Caco-2 (cell line): ENCODE measurements at regions of chr3 and their contacts with region 1.

Region 1: GRCh38 chr3:136752422-136753325 is 496 bp upstream of the STAG1 start:
- DNase-seq: peak; percentile 97 to 99
- H3K4me3 ChIP-seq: peak overlapping the region; percentile 77
- H3K4me3 Mint-ChIP-seq: peak overlapping the region; percentile 76
- H3K27ac Mint-ChIP-seq: peak overlapping the region; percentile 92
- H3K4me1 ChIP-seq: peaks cover 17% of the 10 kb centered on the region
- H3K4me1 Mint-ChIP-seq: peaks cover 18% of the 10 kb centered on the region
- H3K27me3 ChIP-seq: no peaks in the 10 kb centered on the region
- H3K27me3 Mint-ChIP-seq: no peaks in the 10 kb centered on the region
- CTCF ChIP-seq: peak in 1 of 2 experiments; percentile 26

Region 2: DNA sequence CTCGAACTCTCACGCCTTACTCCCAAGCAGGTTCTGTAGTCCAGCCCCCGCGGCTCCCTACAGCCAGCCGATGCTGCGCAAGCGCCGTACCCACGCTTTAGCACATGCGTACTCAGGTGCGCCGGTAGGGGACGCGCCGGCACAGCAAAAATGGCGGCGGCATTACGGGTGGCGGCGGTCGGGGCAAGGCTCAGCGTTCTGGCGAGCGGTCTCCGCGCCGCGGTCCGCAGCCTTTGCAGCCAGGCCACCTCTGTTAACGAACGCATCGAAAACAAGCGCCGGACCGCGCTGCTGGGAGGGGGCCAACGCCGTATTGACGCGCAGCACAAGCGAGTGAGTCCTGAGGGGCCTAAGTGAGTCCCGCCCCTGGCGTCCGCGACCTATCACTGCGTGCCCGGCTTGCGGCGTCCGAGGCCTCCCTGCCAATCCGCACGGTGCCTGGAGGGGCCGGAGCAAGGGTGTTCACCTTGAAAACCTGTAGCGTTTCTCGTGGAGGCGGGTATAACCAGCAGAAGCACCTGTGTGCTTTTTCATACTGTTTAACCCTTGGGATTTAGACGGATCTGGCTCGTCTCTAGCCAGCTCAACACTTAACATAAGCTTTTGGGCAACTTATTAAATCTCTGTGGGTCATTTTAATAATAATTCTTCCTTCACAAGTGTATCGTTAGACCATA is 502.3 kb before region 1 on chr3 and contains the start of gene PCCB:
- CTCF ChIA-PET with region 1: no interaction called
- POLR2A ChIA-PET with region 1: no interaction called
- intact Hi-C with region 1: loop called (anchors 2 kb)
- DNase-seq: peak; percentile 97 to 98
- H3K4me3 ChIP-seq: peak within 1 kb of the TSS; percentile 44
- H3K4me3 Mint-ChIP-seq: peak within 1 kb of the TSS; percentile 80
- H3K27ac Mint-ChIP-seq: peak within 1 kb of the TSS; percentile 99
- H3K4me1 ChIP-seq: peaks cover 33% of the 10 kb centered on the region
- H3K4me1 Mint-ChIP-seq: peaks cover 33% of the 10 kb centered on the region
- H3K27me3 ChIP-seq: no peaks in the 10 kb centered on the region
- H3K27me3 Mint-ChIP-seq: no peaks in the 10 kb centered on the region
- CTCF ChIP-seq: peak; percentile 76 to 87
- total RNA-seq, gene PCCB: 39.7 and 45.5 TPM in 2 replicates

Region 3: DNA sequence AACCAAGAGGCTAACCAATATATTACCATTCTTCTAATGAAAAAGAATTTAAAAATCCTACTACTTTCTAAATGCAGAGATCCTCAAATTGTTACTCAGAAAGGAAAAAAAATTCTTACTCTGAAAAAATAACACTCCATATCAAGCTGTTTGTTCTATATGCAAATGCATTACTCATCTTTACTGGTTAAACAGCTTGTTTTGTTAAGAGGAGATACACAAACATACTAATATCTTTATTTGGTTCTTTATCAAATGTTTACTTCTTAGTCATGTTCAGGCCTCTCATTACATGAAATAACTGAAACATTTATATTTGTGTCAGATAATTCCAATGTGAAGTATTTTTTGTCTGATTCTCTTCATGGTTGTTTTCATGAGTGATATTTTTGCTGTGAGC is 355.8 kb before region 1 on chr3:
- CTCF ChIA-PET with region 1: interaction called, 29 read pairs
- POLR2A ChIA-PET with region 1: interaction called, 5 read pairs
- intact Hi-C with region 1: no loop called
- DNase-seq: no peak
- H3K4me3 ChIP-seq: no peak overlapping the region
- H3K4me3 Mint-ChIP-seq: no peak overlapping the region
- H3K27ac Mint-ChIP-seq: no peak overlapping the region
- H3K4me1 ChIP-seq: no peaks in the 10 kb centered on the region
- H3K4me1 Mint-ChIP-seq: no peaks in the 10 kb centered on the region
- H3K27me3 ChIP-seq: no peaks in the 10 kb centered on the region
- H3K27me3 Mint-ChIP-seq: no peaks in the 10 kb centered on the region
- CTCF ChIP-seq: no peak

Region 4: GRCh38 chr3:136577792-136578191 is 174.9 kb before region 1 on chr3:
- CTCF ChIA-PET with region 1: interaction called, 34 read pairs
- POLR2A ChIA-PET with region 1: interaction called, 20 read pairs
- intact Hi-C with region 1: loop called (anchors 5 kb)
- DNase-seq: peak; percentile 31 to 39
- H3K4me3 ChIP-seq: no peak overlapping the region
- H3K4me3 Mint-ChIP-seq: peak overlapping the region; percentile 5
- H3K27ac Mint-ChIP-seq: peak overlapping the region; percentile 71
- H3K4me1 ChIP-seq: peaks cover 45% of the 10 kb centered on the region
- H3K4me1 Mint-ChIP-seq: peaks cover 30% of the 10 kb centered on the region
- H3K27me3 ChIP-seq: no peaks in the 10 kb centered on the region
- H3K27me3 Mint-ChIP-seq: no peaks in the 10 kb centered on the region
- CTCF ChIP-seq: peak in 1 of 2 experiments; percentile 4

Region 5: GRCh38 chr3:136617198-136617597 is 135.5 kb before region 1 on chr3:
- CTCF ChIA-PET with region 1: interaction called, 11 read pairs
- POLR2A ChIA-PET with region 1: no interaction called
- intact Hi-C with region 1: loop called (anchors 1 kb)
- DNase-seq: peak; percentile 41 to 45
- H3K4me3 ChIP-seq: no peak overlapping the region
- H3K4me3 Mint-ChIP-seq: no peak overlapping the region
- H3K27ac Mint-ChIP-seq: no peak overlapping the region
- H3K4me1 ChIP-seq: peaks cover 12% of the 10 kb centered on the region; the same call in 1 of the 2 replicates
- H3K4me1 Mint-ChIP-seq: peaks cover 16% of the 10 kb centered on the region
- H3K27me3 ChIP-seq: no peaks in the 10 kb centered on the region
- H3K27me3 Mint-ChIP-seq: no peaks in the 10 kb centered on the region
- CTCF ChIP-seq: peak in 1 of 2 experiments; percentile 18

Region 6: DNA sequence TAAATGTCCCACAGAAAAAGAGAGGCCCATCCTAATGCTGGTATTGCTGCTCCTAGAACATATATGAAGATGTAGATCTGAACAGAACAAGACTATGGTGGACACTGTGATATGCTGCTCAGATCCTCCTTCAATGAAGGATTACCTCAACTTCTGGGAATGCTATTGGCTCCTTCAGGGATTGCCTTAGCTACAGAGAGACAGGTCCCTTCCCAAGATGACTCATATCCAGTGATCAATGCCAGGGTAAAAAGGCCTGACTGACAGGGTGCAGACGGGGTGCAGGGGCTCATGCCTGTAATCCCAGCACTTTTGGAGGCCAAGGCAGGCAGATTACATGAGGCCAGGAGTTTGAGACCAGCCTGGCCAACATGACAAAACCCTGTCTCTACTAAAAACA is 20.0 kb after region 1 on chr3:
- CTCF ChIA-PET with region 1: no interaction called
- POLR2A ChIA-PET with region 1: no interaction called
- intact Hi-C with region 1: no loop called
- DNase-seq: no peak
- H3K4me3 ChIP-seq: no peak overlapping the region
- H3K4me3 Mint-ChIP-seq: no peak overlapping the region
- H3K27ac Mint-ChIP-seq: no peak overlapping the region
- H3K4me1 ChIP-seq: no peaks in the 10 kb centered on the region
- H3K4me1 Mint-ChIP-seq: no peaks in the 10 kb centered on the region
- H3K27me3 ChIP-seq: no peaks in the 10 kb centered on the region
- H3K27me3 Mint-ChIP-seq: no peaks in the 10 kb centered on the region
- CTCF ChIP-seq: no peak

Region 7: DNA sequence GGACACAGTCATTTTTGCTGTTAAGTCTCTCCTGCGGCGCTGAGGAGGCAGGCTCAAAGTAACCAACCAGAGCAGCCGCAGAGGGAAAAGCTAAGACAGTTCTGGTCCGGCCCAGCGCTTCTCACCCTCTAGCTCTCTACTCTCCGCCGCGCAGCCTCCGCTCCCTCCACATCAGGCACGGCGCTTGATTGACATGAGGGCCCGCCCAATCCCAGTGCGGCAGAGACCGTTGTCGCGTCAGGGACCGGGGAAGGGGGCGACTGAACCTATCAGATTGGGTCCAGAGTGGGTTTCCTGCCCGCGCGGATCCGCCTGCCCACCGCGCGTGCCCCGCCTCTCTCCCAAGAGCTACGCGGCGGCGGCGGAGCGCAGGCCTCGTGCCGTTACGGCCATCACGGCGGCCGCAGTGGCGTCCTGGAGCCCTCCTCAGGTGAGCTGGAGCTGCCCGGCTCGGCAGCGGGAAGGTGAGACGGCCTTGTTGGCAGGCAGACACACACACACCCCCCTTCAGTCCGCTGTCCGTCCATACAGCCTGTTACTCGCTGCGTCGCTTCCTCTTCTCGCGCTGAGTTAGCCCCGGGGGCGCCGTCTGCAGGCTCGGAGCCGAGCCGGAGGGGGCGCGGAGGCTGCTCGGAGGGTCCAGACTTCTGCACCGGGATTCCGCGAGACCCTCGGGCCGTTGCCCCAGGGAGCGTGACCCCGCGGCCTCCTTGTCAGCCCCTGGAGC is 109.4 kb after region 1 on chr3 and contains the start of gene NCK1:
- CTCF ChIA-PET with region 1: interaction called, 28 read pairs
- POLR2A ChIA-PET with region 1: interaction called, 39 read pairs
- intact Hi-C with region 1: loop called (anchors 1 kb)
- DNase-seq: peak; percentile 98 to 99
- H3K4me3 ChIP-seq: peak within 1 kb of the TSS; percentile 95
- H3K4me3 Mint-ChIP-seq: peak within 1 kb of the TSS; percentile 94
- H3K27ac Mint-ChIP-seq: peak within 1 kb of the TSS; percentile 94
- H3K4me1 ChIP-seq: peaks cover 18% of the 10 kb centered on the region; the same call in 1 of the 2 replicates
- H3K4me1 Mint-ChIP-seq: peaks cover 20% of the 10 kb centered on the region
- H3K27me3 ChIP-seq: no peaks in the 10 kb centered on the region
- H3K27me3 Mint-ChIP-seq: no peaks in the 10 kb centered on the region
- CTCF ChIP-seq: no peak
- total RNA-seq, gene NCK1: 37.3 and 41.2 TPM in 2 replicates

Region 8: GRCh38 chr3:137013955-137014688 is 261.4 kb after region 1 on chr3:
- CTCF ChIA-PET with region 1: interaction called, 70 read pairs
- POLR2A ChIA-PET with region 1: interaction called, 22 read pairs
- intact Hi-C with region 1: loop called (anchors 1 kb)
- DNase-seq: peak; percentile 85 to 90
- H3K4me3 ChIP-seq: peak overlapping the region; percentile 52
- H3K4me3 Mint-ChIP-seq: peak overlapping the region; percentile 88
- H3K27ac Mint-ChIP-seq: peak overlapping the region; percentile 87
- H3K4me1 ChIP-seq: 0 out of 2 replicates have a peak, but pooled peaks cover 3% of the 10 kb centered on the region
- H3K4me1 Mint-ChIP-seq: no peaks in the 10 kb centered on the region
- H3K27me3 ChIP-seq: no peaks in the 10 kb centered on the region
- H3K27me3 Mint-ChIP-seq: no peaks in the 10 kb centered on the region
- CTCF ChIP-seq: peak; percentile 70 to 90